ENCODE measurements at regions of chr1 and their contacts with region 1.

Region 1: DNA sequence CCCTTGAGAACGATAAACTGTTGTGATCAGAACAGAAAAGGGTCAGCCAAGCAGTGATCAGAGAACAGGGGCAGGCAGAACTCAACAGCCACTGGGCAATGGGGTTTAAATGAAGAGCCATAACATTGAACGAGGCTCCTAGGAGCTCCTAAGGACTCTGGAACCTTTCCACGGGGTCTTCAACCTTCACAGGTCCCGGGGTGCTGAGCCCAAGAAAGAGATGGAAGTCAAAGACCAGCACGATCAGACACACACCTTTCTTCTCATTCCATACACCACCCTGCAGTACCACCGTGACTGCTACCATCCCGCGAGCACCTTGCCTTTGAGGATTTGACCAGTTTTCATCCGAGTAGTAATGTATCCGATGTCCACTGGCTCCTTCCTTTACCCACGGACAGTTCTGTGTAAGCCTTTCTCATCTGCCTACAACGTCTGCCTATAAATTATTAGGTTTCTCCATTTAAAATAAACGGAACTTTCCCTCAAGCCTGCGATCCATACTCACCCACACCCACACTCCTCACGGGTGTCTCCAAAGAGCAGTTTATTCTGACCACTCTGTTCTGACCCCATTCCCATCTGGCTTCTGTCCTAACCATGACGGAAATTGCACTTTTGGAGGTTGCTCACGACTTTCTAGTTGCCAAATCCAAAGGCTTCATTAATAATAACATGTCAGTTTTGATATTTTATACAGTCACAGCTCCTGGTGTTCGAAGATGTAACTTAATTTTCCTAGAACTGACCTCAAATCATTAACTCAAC is 16.8 kb upstream of the HHAT start:
- DNase-seq: no peak
- H3K4me3 ChIP-seq: no peak overlapping the region
- H3K27ac ChIP-seq: no peak overlapping the region
- H3K4me1 ChIP-seq: peaks cover 6% of the 10 kb centered on the region
- H3K27me3 ChIP-seq: peaks cover 0 to 2% of the 10 kb centered on the region in 2 experiments
- CTCF ChIP-seq: no peak
- POLR2A ChIP-seq: no peak

Region 2: DNA sequence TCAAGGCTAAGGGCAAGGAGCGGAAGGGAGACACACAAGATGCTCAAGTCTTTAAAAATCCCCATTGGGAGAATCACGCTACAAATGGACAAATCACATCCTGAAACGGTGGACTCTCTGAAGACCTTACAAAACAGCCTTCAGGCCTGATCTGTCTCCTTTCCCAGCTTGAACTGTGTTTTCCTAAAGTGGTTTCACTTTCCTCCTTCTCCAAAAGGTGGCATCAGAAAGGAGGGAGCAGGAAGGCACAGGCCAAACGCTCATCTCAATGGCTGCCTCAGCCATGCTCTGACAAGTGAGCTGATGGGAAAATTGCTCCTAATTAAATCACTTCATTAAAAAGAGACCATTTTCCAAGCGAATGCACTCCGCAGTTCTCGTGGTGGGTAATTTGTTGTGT is 436.4 kb before region 1 on chr1:
- CTCF ChIA-PET with region 1: no interaction called
- POLR2A ChIA-PET with region 1: no interaction called
- dilution Hi-C with region 1: no loop called
- intact Hi-C with region 1: loop called (anchors 5 kb)
- DNase-seq: peak; percentile 51
- H3K4me3 ChIP-seq: no peak overlapping the region
- H3K27ac ChIP-seq: no peak overlapping the region
- H3K4me1 ChIP-seq: peaks cover 22% of the 10 kb centered on the region
- H3K27me3 ChIP-seq: peaks cover 3 to 11% of the 10 kb centered on the region in 2 experiments
- CTCF ChIP-seq: peak; percentile 16 to 42
- POLR2A ChIP-seq: no peak

Region 3: GRCh38 chr1:210143465-210144062 is 168.3 kb before region 1 on chr1:
- CTCF ChIA-PET with region 1: interaction called, 57 read pairs
- POLR2A ChIA-PET with region 1: no interaction called
- dilution Hi-C with region 1: no loop called
- intact Hi-C with region 1: loop called (anchors 1 kb)
- DNase-seq: peak; percentile 83
- H3K4me3 ChIP-seq: no peak overlapping the region
- H3K27ac ChIP-seq: no peak overlapping the region
- H3K4me1 ChIP-seq: no peaks in the 10 kb centered on the region
- H3K27me3 ChIP-seq: peaks cover 2 to 8% of the 10 kb centered on the region in 2 experiments
- CTCF ChIP-seq: peak; percentile 37 to 43
- POLR2A ChIP-seq: no peak

Region 4: GRCh38 chr1:210170220-210170619 is 141.7 kb before region 1 on chr1:
- CTCF ChIA-PET with region 1: no interaction called
- POLR2A ChIA-PET with region 1: no interaction called
- dilution Hi-C with region 1: no loop called
- intact Hi-C with region 1: no loop called
- DNase-seq: no peak
- H3K4me3 ChIP-seq: no peak overlapping the region
- H3K27ac ChIP-seq: no peak overlapping the region
- H3K4me1 ChIP-seq: no peaks in the 10 kb centered on the region
- H3K27me3 ChIP-seq: no peaks in the 10 kb centered on the region
- CTCF ChIP-seq: no peak
- POLR2A ChIP-seq: no peak

Region 5: GRCh38 chr1:210233216-210234020 is 78.5 kb before region 1 on chr1:
- CTCF ChIA-PET with region 1: interaction called, 4 read pairs
- POLR2A ChIA-PET with region 1: no interaction called
- dilution Hi-C with region 1: no loop called
- intact Hi-C with region 1: loop called (anchors 1 kb)
- DNase-seq: peak; percentile 86
- H3K4me3 ChIP-seq: peak overlapping the region; percentile 66 to 80 (median 74)
- H3K27ac ChIP-seq: peak overlapping the region; percentile 83
- H3K4me1 ChIP-seq: peaks cover 35% of the 10 kb centered on the region
- H3K27me3 ChIP-seq: peaks cover 0 to 5% of the 10 kb centered on the region in 2 experiments
- CTCF ChIP-seq: no peak
- POLR2A ChIP-seq: peak; percentile 32

Region 6: GRCh38 chr1:210250998-210251679 is 60.8 kb before region 1 on chr1:
- CTCF ChIA-PET with region 1: interaction called, 3 read pairs
- POLR2A ChIA-PET with region 1: no interaction called
- dilution Hi-C with region 1: no loop called
- intact Hi-C with region 1: loop called (anchors 1 kb)
- DNase-seq: peak; percentile 72
- H3K4me3 ChIP-seq: peak overlapping the region; percentile 34 to 57 (median 37)
- H3K27ac ChIP-seq: peak overlapping the region; percentile 39
- H3K4me1 ChIP-seq: peaks cover 20% of the 10 kb centered on the region
- H3K27me3 ChIP-seq: peaks cover 0 to 8% of the 10 kb centered on the region in 2 experiments
- CTCF ChIP-seq: no peak
- POLR2A ChIP-seq: no peak

Region 7: GRCh38 chr1:210400043-210400840 is 88.3 kb after region 1 on chr1:
- CTCF ChIA-PET with region 1: interaction called, 4 read pairs
- POLR2A ChIA-PET with region 1: no interaction called
- dilution Hi-C with region 1: no loop called
- intact Hi-C with region 1: loop called (anchors 1 kb)
- DNase-seq: peak; percentile 48
- H3K4me3 ChIP-seq: no peak overlapping the region
- H3K27ac ChIP-seq: no peak overlapping the region
- H3K4me1 ChIP-seq: no peaks in the 10 kb centered on the region
- H3K27me3 ChIP-seq: peaks cover 1 to 4% of the 10 kb centered on the region in 2 experiments
- CTCF ChIP-seq: peak; percentile 81 to 89
- POLR2A ChIP-seq: no peak